Posterior cingulate gyrus (tissue), 11 donors: ENCODE measurements at regions of chr2 and their contacts with region 1.

Region 1: GRCh38 chr2:36902385-36903120 is 63.8 kb downstream of the STRN start:
- DNase-seq: no peak

Region 2: GRCh38 chr2:36966370-36967235 is 64.0 kb after region 1 on chr2 and contains the start of gene STRN:
- intact Hi-C with region 1: loop called (anchors 5 kb)
- DNase-seq: peak; percentile 93 to 100 (median 94)